Aorta (tissue), 5 donors: ENCODE measurements at regions of chr15 and their contacts with region 1.

Region 1: DNA sequence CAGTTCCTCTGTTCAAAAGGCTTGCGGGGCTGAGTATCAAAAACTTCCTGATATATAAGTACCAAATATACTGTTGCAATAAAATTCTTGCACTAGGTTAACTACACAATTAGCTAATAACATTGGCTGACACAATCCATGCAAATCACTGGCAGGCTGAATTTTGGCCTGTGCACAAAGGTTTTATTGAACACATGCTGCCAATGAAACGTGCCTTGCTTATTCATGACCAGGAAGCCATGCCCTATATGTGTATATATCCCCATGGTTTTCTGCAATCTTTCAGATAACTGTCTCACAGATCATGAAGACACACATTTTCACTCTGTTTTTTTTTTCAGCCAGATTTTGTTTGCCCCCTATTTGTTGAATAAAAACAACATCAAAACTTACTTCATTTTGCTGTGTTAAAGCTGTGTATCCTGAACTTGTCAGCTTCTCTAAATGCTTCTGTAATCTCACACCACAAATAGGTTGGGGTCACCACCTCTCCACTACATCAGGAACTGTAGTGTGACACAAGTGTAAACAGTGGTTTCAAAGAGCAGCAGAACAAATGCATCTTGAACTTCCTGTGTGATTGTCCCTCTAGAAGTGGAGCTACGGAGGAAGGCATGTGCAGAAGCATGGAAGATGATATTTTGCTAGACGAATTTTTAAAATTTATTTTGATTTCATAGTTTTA is 920.7 kb upstream of the NR2F2 start:
- DNase-seq: no peak
- ATAC-seq: no peak
- H3K4me3 ChIP-seq: no peak overlapping the region
- H3K27ac ChIP-seq: no peak overlapping the region
- H3K4me1 ChIP-seq: peaks cover 6 to 8% of the 10 kb centered on the region in 2 donors
- H3K27me3 ChIP-seq: no peaks in the 10 kb centered on the region

Region 2: GRCh38 chr15:95266451-95267061 is 143.2 kb before region 1 on chr15:
- intact Hi-C with region 1: loop called (anchors 5 to 10 kb)
- DNase-seq: peak in 1 of 2 donors; percentile 55
- ATAC-seq: peak; percentile 65
- H3K4me3 ChIP-seq: no peak overlapping the region
- H3K27ac ChIP-seq: peak overlapping the region; percentile 91 to 99
- H3K4me1 ChIP-seq: peaks cover 2 to 5% of the 10 kb centered on the region in 2 donors
- H3K27me3 ChIP-seq: no peaks in the 10 kb centered on the region

Region 3: GRCh38 chr15:95464509-95464908 is 54.7 kb after region 1 on chr15:
- intact Hi-C with region 1: loop called in 1 of 2 experiments (anchors 10 kb)
- DNase-seq: no peak
- ATAC-seq: peak; percentile 53
- H3K4me3 ChIP-seq: no peak overlapping the region
- H3K27ac ChIP-seq: peak overlapping the region in 1 of 2 donors; percentile 63
- H3K4me1 ChIP-seq: peaks cover 0 to 1% of the 10 kb centered on the region in 2 donors
- H3K27me3 ChIP-seq: no peaks in the 10 kb centered on the region

Region 4: GRCh38 chr15:95604634-95605036 is 194.9 kb after region 1 on chr15:
- intact Hi-C with region 1: loop called (anchors 10 kb)
- DNase-seq: no peak
- ATAC-seq: peak; percentile 77
- H3K4me3 ChIP-seq: no peak overlapping the region
- H3K27ac ChIP-seq: no peak overlapping the region
- H3K4me1 ChIP-seq: peaks cover 4% of the 10 kb centered on the region in 2 donors
- H3K27me3 ChIP-seq: no peaks in the 10 kb centered on the region